PC-3 (cell line): ENCODE measurements at regions of chr5 and their contacts with region 1.

Region 1: GRCh38 chr5:173057062-173057924 is 1.1 kb downstream of the CREBRF start:
- DNase-seq: peak; percentile 98
- ATAC-seq: peak; percentile 88
- H3K4me3 ChIP-seq: peak overlapping the region; percentile 79
- H3K27ac ChIP-seq: peak overlapping the region; percentile 42
- H3K4me1 ChIP-seq: peaks cover 6% of the 10 kb centered on the region; the same call in 1 of the 2 replicates
- H3K27me3 ChIP-seq: no peaks in the 10 kb centered on the region
- CTCF ChIP-seq: no peak

Region 2: DNA sequence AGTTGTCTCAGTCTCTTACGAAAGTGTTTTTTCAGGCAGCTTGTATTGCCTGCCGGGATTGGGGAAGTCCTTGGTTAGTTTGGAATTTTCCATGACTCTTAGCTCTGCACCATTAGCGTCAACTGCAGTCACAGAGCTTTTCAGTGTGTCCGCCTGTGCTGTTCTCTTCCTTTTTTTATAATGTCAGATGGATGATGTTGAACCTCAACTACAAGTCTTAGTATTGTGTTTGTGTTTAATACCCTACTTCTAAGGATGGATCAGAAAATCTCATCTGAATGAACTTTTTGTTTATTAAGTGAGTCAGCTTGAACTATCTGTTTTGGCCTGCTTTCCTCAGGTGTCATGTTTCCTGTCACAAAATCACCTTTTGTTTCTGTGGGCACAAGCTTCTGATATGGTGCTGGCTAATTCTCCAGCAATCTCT is 40.7 kb before region 1 on chr5:
- CTCF ChIA-PET with region 1: no interaction called
- POLR2A ChIA-PET with region 1: no interaction called
- intact Hi-C with region 1: loop called (anchors 5 kb)
- DNase-seq: peak; percentile 77
- ATAC-seq: peak; percentile 94
- H3K4me3 ChIP-seq: no peak overlapping the region
- H3K27ac ChIP-seq: peak overlapping the region; percentile 58
- H3K4me1 ChIP-seq: peaks cover 22% of the 10 kb centered on the region
- H3K27me3 ChIP-seq: no peaks in the 10 kb centered on the region
- CTCF ChIP-seq: no peak

Region 3: DNA sequence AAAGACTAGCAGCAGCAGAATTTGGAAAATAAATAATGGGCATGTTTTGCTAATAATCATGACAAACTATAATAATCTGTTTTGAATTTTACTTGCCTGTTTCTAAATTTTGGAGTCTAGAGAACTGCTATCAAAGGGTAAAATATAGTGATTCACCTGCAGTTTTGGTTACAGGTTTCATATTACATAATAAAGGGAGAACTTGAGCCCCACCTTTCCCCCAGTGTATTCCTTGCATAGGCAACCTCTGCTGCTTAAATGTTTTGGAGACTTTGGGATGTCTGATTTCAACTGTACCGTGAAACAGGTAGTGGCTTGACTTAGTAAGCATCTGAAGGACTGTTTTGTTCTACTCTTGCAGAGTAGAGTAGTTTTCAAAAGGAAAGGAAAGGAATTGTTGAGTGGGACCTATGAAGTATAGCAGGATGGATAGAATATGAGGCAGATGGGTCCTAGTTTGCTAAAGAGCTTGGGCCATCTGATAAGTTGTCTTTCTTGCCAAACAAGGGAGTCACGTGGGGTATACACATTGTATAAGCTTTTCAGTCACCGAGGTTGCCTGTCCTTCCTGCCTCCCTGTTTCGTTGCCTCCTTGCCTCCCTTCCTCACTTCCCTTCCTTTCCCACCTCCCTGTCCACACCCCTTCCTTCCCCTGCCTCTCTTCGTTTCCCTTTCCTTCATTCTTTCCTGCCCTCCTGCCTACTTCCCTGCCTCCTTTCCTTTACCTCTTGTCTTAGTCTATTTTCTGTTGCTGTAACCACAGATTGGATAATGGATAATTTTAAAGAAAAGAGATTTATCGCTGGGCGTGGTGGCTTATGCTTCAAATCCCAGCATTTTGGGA is 18.1 kb after region 1 on chr5:
- CTCF ChIA-PET with region 1: interaction called, 11 read pairs
- POLR2A ChIA-PET with region 1: no interaction called
- intact Hi-C with region 1: no loop called
- DNase-seq: peak; percentile 47
- ATAC-seq: peak; percentile 77
- H3K4me3 ChIP-seq: no peak overlapping the region
- H3K27ac ChIP-seq: no peak overlapping the region
- H3K4me1 ChIP-seq: peaks cover 12% of the 10 kb centered on the region
- H3K27me3 ChIP-seq: no peaks in the 10 kb centered on the region
- CTCF ChIP-seq: no peak

Region 4: GRCh38 chr5:173144200-173145176 is 87.2 kb after region 1 on chr5 and contains the start of gene BNIP1:
- CTCF ChIA-PET with region 1: no interaction called
- POLR2A ChIA-PET with region 1: no interaction called
- intact Hi-C with region 1: loop called (anchors 1 kb)
- DNase-seq: peak; percentile 97
- ATAC-seq: peak; percentile 97
- H3K4me3 ChIP-seq: peak within 1 kb of the TSS; percentile 88
- H3K27ac ChIP-seq: peak within 1 kb of the TSS; percentile 82
- H3K4me1 ChIP-seq: no peaks in the 10 kb centered on the region; the same call in 1 of the 2 replicates
- H3K27me3 ChIP-seq: no peaks in the 10 kb centered on the region
- CTCF ChIP-seq: peak; percentile 79
- total RNA-seq, gene BNIP1: 17.0 and 21.5 TPM in 2 replicates

Region 5: GRCh38 chr5:173204185-173204979 is 147.1 kb after region 1 on chr5:
- CTCF ChIA-PET with region 1: no interaction called
- POLR2A ChIA-PET with region 1: no interaction called
- intact Hi-C with region 1: loop called (anchors 1 kb)
- DNase-seq: peak; percentile 63
- ATAC-seq: no peak
- H3K4me3 ChIP-seq: no peak overlapping the region
- H3K27ac ChIP-seq: no peak overlapping the region
- H3K4me1 ChIP-seq: peaks cover 15% of the 10 kb centered on the region
- H3K27me3 ChIP-seq: peaks cover 9% of the 10 kb centered on the region; the same call in 1 of the 2 replicates
- CTCF ChIP-seq: peak; percentile 75

Region 6: GRCh38 chr5:173341961-173342430 is 284.7 kb after region 1 on chr5:
- CTCF ChIA-PET with region 1: no interaction called
- POLR2A ChIA-PET with region 1: no interaction called
- intact Hi-C with region 1: no loop called
- DNase-seq: no peak
- ATAC-seq: no peak
- H3K4me3 ChIP-seq: no peak overlapping the region
- H3K27ac ChIP-seq: no peak overlapping the region
- H3K4me1 ChIP-seq: peaks cover 4% of the 10 kb centered on the region
- H3K27me3 ChIP-seq: no peaks in the 10 kb centered on the region
- CTCF ChIP-seq: no peak